GM12878 (cell line): ENCODE measurements at regions of chr17 and their contacts with region 1.

Region 1: DNA sequence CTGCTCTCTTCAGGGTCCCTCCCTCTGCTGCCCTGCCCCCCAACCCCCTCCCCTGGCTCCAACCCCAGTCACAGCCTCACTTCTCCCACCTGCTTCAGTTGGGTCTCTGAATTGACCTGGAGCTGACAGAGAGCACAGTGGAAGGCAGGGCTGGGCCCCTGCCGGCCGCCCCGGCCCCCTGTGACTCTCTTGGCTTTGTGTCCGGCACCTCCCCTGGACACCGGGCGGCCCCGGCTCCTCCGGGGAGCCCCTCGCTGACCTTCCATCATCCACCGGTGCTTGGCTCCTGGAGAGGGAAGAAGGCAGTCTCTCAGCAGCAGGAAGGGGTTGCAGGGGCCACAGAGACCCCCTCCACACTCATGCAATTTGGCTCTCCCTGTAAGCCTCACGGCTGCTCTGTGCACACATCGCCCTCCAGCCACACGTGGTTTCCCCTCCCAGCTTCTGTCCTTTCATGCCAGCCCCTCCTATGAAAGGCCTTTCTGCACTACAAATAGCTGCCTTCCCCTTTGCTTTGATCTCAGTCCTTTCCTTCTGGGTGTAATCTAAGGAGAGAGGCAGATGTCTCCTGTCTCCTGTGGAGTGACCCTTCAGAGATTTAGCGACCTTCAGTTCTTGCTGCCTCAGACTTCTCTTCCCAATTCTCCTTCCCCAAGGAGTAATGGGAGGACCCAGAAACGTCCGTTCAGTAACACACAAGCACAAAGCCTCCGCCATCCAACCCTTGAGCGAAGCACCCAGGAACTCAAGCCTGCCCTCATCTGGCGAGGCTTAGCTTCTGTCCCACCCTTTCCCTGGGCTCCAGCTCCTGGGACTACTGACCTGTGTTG is 8.3 kb downstream of the NKIRAS2 start:
- DNase-seq: no peak
- ATAC-seq: no peak
- H3K4me3 ChIP-seq: no peak overlapping the region
- H3K27ac ChIP-seq: no peak overlapping the region
- H3K4me1 ChIP-seq: peaks cover 13% of the 10 kb centered on the region
- H3K27me3 ChIP-seq: no peaks in the 10 kb centered on the region
- CTCF ChIP-seq: peak in 2 of 3 experiments; percentile 23 to 24; a peak in 1 of 6 replicates
- EP300 ChIP-seq: no peak
- POLR2A ChIP-seq: no peak
- RAD21 ChIP-seq: no peak

Region 2: GRCh38 chr17:41567317-41567716 is 460.9 kb before region 1 on chr17:
- CTCF ChIA-PET with region 1: no interaction called
- POLR2A ChIA-PET with region 1: no interaction called
- RAD21 ChIA-PET with region 1: no interaction called
- SMC1A ChIA-PET with region 1: no interaction called
- in situ Hi-C with region 1: no loop called
- intact Hi-C with region 1: no loop called
- DNase-seq: no peak
- ATAC-seq: no peak
- H3K4me3 ChIP-seq: no peak overlapping the region
- H3K27ac ChIP-seq: no peak overlapping the region
- H3K4me1 ChIP-seq: no peaks in the 10 kb centered on the region
- H3K27me3 ChIP-seq: peaks cover 0 to 2% of the 10 kb centered on the region in 2 experiments; a peak in 3 of 4 replicates
- CTCF ChIP-seq: no peak
- EP300 ChIP-seq: no peak
- POLR2A ChIP-seq: no peak
- RAD21 ChIP-seq: no peak

Region 3: GRCh38 chr17:42039794-42040763 is 11.9 kb after region 1 on chr17:
- CTCF ChIA-PET with region 1: interaction called, 9 read pairs
- POLR2A ChIA-PET with region 1: interaction called, 12 read pairs
- RAD21 ChIA-PET with region 1: no interaction called
- SMC1A ChIA-PET with region 1: interaction called, 7 read pairs
- in situ Hi-C with region 1: no loop called
- intact Hi-C with region 1: no loop called
- DNase-seq: no peak
- ATAC-seq: no peak
- H3K4me3 ChIP-seq: no peak overlapping the region
- H3K27ac ChIP-seq: no peak overlapping the region
- H3K4me1 ChIP-seq: peaks cover 8% of the 10 kb centered on the region; the same call in 1 of the 2 replicates
- H3K27me3 ChIP-seq: no peaks in the 10 kb centered on the region
- CTCF ChIP-seq: no peak
- EP300 ChIP-seq: no peak
- POLR2A ChIP-seq: no peak
- RAD21 ChIP-seq: no peak

Region 4: DNA sequence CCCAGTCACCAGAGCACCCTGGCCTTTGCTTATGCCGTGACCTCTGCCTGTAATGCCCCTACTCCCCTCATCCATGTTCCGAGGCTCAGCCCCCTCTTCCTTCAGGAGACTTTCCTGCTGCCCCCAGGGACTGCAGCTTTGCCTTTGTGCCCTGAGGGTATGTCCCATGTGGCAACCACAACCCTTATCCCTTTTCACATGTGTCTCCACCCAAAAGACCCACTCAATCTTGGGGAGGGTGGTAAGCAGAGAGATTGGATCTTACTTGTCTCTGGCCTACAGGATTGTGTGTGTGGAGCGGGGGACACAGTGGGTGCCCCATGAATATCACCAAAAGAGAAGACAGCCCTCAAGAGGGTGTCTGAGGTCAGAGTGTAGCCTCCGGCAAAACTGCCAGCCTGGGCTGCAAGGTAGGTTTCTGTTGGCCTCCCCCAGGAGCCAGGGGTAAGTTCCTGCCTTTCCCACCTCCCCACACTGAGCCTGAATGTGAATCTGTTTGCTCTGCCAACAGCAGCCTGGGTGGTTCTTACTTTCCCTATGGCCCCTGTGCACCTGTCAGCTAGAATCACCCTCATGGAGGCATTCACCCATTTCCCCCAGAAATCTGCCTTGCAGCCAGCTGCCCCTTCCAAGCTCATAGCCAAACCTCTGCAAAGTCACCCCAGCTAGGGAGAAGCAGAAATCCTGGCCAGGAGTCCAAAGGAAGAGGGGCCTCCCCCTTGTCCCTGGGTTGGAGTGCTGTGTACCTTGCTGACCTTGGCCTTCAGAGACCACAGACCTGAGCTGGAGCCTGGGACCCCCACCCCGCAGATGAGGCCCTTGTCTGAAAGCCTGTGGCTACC is 33.7 kb after region 1 on chr17:
- CTCF ChIA-PET with region 1: interaction called, 11 read pairs
- POLR2A ChIA-PET with region 1: interaction called, 4 read pairs
- RAD21 ChIA-PET with region 1: interaction called, 3 read pairs
- SMC1A ChIA-PET with region 1: interaction called, 5 read pairs
- in situ Hi-C with region 1: no loop called
- intact Hi-C with region 1: loop called (anchors 5 kb)
- DNase-seq: no peak
- ATAC-seq: no peak
- H3K4me3 ChIP-seq: no peak overlapping the region
- H3K27ac ChIP-seq: no peak overlapping the region
- H3K4me1 ChIP-seq: peaks cover 11% of the 10 kb centered on the region
- H3K27me3 ChIP-seq: no peaks in the 10 kb centered on the region
- CTCF ChIP-seq: no peak
- EP300 ChIP-seq: no peak
- POLR2A ChIP-seq: no peak
- RAD21 ChIP-seq: no peak

Region 5: GRCh38 chr17:42101513-42102319 is 73.5 kb after region 1 on chr17:
- CTCF ChIA-PET with region 1: interaction called, 10 read pairs
- POLR2A ChIA-PET with region 1: interaction called, 5 read pairs
- RAD21 ChIA-PET with region 1: interaction called, 3 read pairs
- SMC1A ChIA-PET with region 1: interaction called, 6 read pairs
- in situ Hi-C with region 1: no loop called
- intact Hi-C with region 1: loop called (anchors 5 kb)
- DNase-seq: no peak
- ATAC-seq: peak; percentile 87
- H3K4me3 ChIP-seq: no peak overlapping the region
- H3K27ac ChIP-seq: no peak overlapping the region
- H3K4me1 ChIP-seq: peaks cover 5% of the 10 kb centered on the region
- H3K27me3 ChIP-seq: peaks cover 1 to 6% of the 10 kb centered on the region in 2 experiments; a peak in 1 of 4 replicates
- CTCF ChIP-seq: peak; percentile 84 to 92 (median 92)
- EP300 ChIP-seq: no peak
- POLR2A ChIP-seq: peak; percentile 36; the same call in 1 of the 2 replicates
- RAD21 ChIP-seq: peak; percentile 81

Region 6: GRCh38 chr17:42112552-42113176 is 84.5 kb after region 1 on chr17 and contains the start of gene DHX58:
- CTCF ChIA-PET with region 1: interaction called, 83 read pairs
- POLR2A ChIA-PET with region 1: interaction called, 5 read pairs
- RAD21 ChIA-PET with region 1: interaction called, 17 read pairs
- SMC1A ChIA-PET with region 1: interaction called, 16 read pairs
- in situ Hi-C with region 1: loop called (anchors 5 kb)
- intact Hi-C with region 1: loop called (anchors 1 kb)
- DNase-seq: peak; percentile 90
- ATAC-seq: peak; percentile 85
- H3K4me3 ChIP-seq: peak within 1 kb of the TSS; percentile 79
- H3K27ac ChIP-seq: peak within 1 kb of the TSS; percentile 98
- H3K4me1 ChIP-seq: peaks cover 37% of the 10 kb centered on the region
- H3K27me3 ChIP-seq: no peaks in the 10 kb centered on the region
- CTCF ChIP-seq: no peak
- EP300 ChIP-seq: no peak
- POLR2A ChIP-seq: peak; percentile 94
- RAD21 ChIP-seq: no peak
- polyA plus RNA-seq, gene DHX58: 3.5 to 3.7 TPM

Region 7: DNA sequence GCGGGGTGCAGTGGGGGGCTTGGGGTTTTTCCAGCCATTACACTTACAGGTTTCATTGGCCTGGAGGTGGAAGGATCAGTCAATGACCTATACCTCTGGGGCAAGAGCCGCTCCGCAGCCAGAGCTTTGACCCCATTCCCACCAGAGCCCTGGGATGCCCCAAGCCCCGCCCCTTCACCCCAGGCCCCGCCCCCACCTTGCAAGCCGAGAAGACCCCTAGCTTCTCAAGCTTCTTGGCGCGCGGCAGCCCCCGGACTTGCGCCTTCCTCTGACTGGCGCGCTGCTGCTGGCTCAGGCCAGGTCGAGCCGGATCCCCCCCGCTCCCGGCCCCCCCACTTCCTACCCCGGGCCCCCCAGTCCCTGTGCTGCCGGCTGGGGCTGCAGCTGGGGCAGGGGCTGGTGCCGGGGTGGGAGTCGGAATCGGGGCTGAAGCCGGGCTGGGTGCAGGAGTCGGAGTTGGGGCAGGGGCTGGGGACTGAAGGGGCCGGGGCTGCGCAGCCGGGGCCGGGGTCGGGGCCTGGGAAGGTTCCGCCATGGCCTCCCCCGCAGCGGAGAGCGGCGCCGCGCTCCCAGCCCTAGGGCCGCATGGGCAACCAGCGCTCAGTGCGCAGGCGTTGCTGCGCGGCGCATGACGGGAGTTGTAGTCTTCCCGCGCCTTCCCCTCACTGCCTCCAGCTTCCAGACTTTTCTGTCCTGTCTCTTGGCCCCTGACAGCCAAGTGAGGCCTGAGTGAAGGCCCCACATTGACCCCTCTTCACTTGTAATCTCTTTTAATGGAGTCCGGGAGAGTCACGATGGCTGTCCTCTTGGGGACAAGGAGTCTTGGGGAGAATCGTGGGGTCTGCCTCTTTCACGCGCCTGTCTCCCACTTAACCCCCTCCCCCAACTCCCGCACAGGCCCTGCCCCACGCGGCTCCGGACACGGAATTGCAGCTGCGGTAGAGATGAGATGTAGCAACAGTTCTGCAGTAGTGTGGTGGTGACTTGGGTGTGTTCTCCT is 92.9 kb after region 1 on chr17 and contains the start of gene KAT2A:
- CTCF ChIA-PET with region 1: interaction called, 83 read pairs
- POLR2A ChIA-PET with region 1: interaction called, 5 read pairs
- RAD21 ChIA-PET with region 1: interaction called, 17 read pairs
- SMC1A ChIA-PET with region 1: interaction called, 16 read pairs
- in situ Hi-C with region 1: no loop called
- intact Hi-C with region 1: loop called (anchors 1 kb)
- DNase-seq: no peak
- ATAC-seq: peak; percentile 94
- H3K4me3 ChIP-seq: peak within 1 kb of the TSS; percentile 82
- H3K27ac ChIP-seq: no peak within 1 kb of the TSS
- H3K4me1 ChIP-seq: peaks cover 5% of the 10 kb centered on the region
- H3K27me3 ChIP-seq: no peaks in the 10 kb centered on the region
- CTCF ChIP-seq: no peak
- EP300 ChIP-seq: no peak
- POLR2A ChIP-seq: peak; percentile 91
- RAD21 ChIP-seq: no peak
- polyA plus RNA-seq, gene KAT2A: 0.85 to 3.0 TPM